Activated naive CD4-positive, alpha-beta T cell treated with anti-CD3 and anti-CD28 coated beads, Interleukin-2, amount 10 ng/mL, durations not matched to agents 7 days and 5 days (primary cell): ENCODE measurements at regions of chr7 and their contacts with region 1.

Region 1: DNA sequence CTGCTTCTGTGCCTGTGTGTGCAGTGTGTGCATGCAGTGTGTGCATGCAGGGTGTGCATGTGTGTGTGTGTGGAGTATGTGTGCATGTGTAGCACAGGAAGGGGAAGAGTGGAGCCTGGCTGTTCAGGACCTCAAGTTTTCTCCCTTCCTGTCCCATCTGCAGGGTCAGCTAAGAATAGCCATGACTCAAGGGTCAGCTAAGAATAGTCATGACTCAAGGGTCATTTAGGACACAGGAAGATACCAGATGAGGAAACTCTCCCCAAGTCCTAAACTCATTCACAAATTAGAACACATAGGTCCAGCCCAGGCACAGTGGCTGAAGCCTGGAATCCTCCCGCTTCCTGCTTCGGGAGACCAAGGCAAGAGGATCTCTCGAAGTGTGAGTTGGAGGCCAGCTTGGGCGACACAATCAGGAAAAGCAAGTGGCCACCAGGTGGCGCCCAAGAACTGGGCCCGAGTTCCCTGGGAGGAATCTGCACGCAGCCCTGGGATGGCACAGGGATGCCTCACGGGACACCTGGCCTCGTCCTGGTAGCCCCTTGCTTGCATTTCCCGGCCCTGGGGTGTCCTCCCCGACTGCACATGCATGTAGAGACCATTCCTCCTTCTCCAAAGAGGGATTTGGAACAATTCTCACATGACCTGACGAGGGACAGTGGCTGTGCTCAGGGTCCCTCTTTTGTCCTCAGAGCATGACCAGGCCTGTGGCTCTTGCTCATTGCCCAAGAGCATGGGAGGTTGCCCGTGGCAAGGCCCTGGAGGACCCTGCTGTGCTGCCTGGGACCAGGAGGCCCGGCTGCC is 21.4 kb upstream of the VOPP1 start:
- DNase-seq: peak; percentile 77
- H3K4me3 Mint-ChIP-seq: no peak overlapping the region
- H3K27ac Mint-ChIP-seq: no peak overlapping the region
- H3K4me1 Mint-ChIP-seq: peaks cover 6% of the 10 kb centered on the region
- H3K27me3 Mint-ChIP-seq: peaks cover 36% of the 10 kb centered on the region

Region 2: GRCh38 chr7:55432939-55433784 is 160.6 kb before region 1 on chr7:
- CTCF ChIA-PET with region 1: interaction called, 15 read pairs
- DNase-seq: peak; percentile 36
- H3K4me3 Mint-ChIP-seq: no peak overlapping the region
- H3K27ac Mint-ChIP-seq: peak overlapping the region; percentile 67
- H3K4me1 Mint-ChIP-seq: peaks cover 24% of the 10 kb centered on the region
- H3K27me3 Mint-ChIP-seq: no peaks in the 10 kb centered on the region